Mucosa of descending colon (tissue), 3 donors: ENCODE measurements at regions of chr4 and their contacts with region 1.

Region 1: GRCh38 chr4:52983563-52984303 is 121.6 kb downstream of the RASL11B start:
- DNase-seq: peak in 1 of 3 donors; percentile 66
- ATAC-seq: peak; percentile 74
- H3K4me3 ChIP-seq: no peak overlapping the region
- H3K4me1 ChIP-seq: no peaks in the 10 kb centered on the region
- CTCF ChIP-seq: peak; percentile 41

Region 2: DNA sequence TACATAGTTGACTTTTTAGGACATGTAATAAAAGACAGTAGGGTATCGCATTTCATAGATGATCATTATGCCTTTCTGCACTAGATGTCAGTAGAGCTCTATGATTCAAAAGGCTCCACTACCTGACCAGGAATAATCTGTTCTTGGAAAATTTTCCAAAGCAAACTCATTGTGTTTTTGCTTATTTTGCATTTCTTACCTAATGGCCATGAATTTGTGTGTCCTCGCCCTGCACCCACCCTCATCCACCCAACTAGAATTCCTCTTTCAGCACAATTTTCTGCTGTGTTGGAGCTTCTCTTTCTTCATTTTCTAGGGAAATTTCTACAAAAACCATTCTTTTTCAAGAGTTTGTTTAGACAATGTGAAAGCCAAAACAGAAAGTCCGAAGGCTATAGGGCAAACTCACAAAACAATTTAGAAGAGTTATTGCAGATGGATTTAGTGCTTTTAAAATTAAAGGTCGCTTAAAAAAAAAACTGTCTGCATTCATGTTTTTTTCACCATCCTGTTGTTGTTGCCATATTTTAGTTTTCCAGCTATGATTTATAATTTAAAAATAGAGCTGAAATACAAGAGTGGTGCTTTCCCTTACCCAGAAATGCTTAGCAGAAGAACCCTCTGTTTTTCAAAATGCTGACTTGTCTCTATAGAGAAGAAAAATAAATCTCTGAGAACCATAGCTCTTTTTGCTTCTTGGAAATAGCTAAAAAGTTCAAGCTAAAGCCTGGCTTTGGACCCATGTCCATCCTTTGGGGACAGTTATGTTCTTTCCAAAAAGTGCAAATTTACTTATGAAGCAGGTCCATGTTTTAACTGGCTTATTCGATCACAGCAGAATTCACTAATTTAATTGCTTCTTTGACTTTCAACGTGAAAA is 748.9 kb before region 1 on chr4:
- intact Hi-C with region 1: loop called in 1 of 2 experiments (anchors 10 kb)
- DNase-seq: no peak
- ATAC-seq: no peak
- H3K4me3 ChIP-seq: no peak overlapping the region
- H3K4me1 ChIP-seq: no peaks in the 10 kb centered on the region
- CTCF ChIP-seq: no peak

Region 3: DNA sequence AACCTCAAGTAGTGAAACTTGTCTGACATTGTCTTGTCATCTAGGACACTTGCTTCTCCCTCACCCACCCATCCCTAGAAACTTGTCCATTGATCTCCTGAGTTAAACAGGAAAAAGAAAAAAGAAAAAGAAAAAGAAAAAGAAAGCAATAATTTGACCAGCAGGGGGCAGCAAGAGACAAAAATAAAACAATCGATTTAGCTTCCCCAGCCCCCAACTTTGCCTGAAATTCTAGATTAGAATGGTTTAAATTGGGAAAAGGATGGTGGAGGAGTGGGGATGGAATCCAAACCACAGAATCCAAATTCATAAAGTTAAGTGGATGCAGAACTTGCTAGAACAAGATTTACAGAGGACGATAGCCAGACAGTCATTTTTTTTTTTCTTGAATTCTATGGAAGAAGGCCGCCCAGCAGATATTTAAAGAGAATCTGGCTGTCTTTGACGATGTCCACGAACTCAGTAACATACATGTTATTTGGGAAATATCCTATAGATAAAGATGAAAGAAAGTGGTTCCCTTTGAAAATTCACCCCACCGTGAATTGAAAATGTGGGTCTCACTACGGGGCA is 607.5 kb before region 1 on chr4:
- intact Hi-C with region 1: loop called (anchors 10 kb)
- DNase-seq: peak in 1 of 3 donors; percentile 64
- ATAC-seq: no peak
- H3K4me3 ChIP-seq: no peak overlapping the region
- H3K4me1 ChIP-seq: no peaks in the 10 kb centered on the region
- CTCF ChIP-seq: no peak

Region 4: GRCh38 chr4:52472444-52472843 is 511.3 kb before region 1 on chr4:
- intact Hi-C with region 1: no loop called
- DNase-seq: no peak
- ATAC-seq: no peak
- H3K4me3 ChIP-seq: no peak overlapping the region
- H3K4me1 ChIP-seq: no peaks in the 10 kb centered on the region
- CTCF ChIP-seq: no peak

Region 5: DNA sequence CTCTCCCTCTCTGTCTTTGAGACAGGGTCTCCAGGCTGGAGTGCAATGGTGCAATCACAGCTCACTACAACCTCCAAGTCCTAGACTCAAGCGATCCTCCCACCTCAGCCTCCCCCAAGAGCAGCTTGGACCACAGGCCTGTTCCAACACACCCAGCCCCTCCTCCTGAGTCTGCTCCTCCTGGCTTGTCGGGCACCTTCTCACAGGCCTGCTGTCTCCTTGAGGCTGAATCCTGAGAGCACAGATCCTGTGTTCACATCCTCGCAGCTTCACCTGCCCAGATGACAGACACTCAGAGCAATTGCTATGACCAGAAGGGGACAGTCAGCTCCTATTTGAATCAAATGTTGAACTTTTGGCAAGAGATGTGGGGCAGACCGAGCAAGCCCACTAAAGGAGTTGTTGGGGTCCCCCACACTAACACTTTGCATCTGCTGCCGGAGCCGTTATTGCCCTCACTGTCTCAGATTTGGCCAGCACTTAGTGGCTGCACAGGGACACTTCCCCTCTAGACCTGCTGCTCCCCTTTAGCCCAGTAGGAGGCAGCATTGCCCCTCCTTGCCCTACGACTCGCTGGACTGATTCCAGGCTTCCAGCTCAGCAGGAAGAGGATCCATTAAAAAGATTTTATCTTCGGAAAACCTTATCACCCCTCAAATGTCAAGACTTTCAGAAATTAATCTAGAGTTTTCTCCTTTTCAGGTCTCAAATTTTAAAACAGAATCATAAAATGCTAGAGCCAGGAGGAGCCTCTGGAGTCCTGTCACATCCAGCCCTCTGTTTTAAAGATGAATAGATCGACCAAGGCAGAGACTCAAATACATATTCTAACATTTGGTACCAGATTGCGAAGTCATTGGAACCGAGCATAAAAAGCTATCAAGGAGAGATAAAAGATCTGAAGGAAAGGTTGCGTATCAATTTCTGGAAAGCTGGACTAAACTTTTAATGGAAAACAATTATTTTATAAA is 438.3 kb before region 1 on chr4:
- intact Hi-C with region 1: loop called (anchors 5 kb)
- DNase-seq: peak; percentile 44 to 89 (median 81)
- ATAC-seq: peak; percentile 98
- H3K4me3 ChIP-seq: no peak overlapping the region
- H3K4me1 ChIP-seq: peaks cover 4% of the 10 kb centered on the region
- CTCF ChIP-seq: peak; percentile 84

Region 6: GRCh38 chr4:52914051-52914605 is 69.6 kb before region 1 on chr4:
- intact Hi-C with region 1: no loop called
- DNase-seq: no peak
- ATAC-seq: peak; percentile 67
- H3K4me3 ChIP-seq: no peak overlapping the region
- H3K4me1 ChIP-seq: no peaks in the 10 kb centered on the region
- CTCF ChIP-seq: no peak

Region 7: DNA sequence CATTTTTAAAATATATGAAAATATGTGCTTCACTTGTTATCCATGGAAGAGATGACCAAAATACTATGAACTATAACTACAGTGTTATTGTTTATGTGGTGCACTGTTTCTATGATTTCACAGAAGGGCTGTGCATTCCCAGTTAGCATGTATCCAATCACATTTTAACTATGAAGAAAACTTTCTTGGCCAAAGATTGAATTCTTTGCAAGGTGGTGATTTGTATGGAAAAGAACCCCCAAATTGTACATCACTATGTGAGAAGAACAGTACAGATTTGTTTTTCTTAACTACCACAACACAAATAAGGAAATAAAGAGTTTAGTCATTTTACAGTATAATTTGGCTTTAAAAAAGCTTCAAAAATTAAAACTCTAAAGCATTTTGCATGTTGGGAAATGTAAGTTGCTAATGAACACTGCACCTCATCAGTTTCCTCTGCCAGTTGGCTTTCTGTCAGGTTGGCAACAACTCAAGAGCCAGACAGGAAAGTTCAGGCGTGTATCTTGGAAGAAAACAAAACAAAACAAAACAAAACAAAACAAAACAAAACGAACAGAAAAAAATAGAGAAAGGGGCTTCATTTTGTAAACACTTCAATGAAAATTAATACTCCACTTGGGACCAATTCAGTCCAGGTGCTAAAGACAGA is 145.1 kb after region 1 on chr4:
- intact Hi-C with region 1: no loop called
- DNase-seq: peak in 1 of 3 donors; percentile 11
- ATAC-seq: no peak
- H3K4me3 ChIP-seq: no peak overlapping the region
- H3K4me1 ChIP-seq: no peaks in the 10 kb centered on the region
- CTCF ChIP-seq: no peak